Left ventricle myocardium inferior (tissue), 1 donor: ENCODE measurements at regions of chr5 and their contacts with region 1.

Region 1: DNA sequence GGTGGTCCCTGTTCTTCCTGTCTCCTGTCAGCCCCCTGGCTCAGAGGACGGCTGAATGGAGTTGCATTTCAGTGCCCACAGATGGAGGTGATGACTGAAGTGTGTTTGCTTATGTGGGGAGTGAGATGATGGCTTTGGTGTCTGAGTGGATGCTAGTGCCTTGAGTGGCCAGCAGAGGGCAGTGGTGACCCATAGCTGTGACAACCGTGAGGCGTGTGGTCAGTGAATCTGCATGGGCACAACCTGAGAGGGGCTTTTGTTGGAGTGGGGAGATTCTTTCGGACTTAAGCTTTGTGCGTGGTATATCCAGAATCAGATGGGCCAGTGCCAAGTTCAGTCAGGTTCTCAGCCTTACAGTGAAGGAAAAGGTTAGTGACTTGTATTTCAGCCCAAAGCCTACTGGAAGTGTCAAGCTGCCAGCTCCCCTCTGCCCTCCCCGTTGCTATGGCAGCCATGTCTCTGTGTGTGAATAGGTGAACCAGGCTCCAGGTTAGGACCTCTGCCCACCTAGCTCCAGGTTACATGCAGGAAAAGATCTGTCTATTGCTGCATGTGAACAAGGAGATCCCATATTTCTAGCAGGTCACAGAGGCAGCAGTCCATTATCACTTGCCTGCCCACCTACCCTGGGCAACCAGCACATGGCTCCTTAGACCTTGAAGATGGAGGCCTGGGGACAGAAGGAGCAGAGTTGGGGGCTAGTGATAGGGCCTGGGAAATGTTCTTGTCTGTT is 14.7 kb upstream of the CXXC5 start:
- DNase-seq: no peak
- H3K4me3 ChIP-seq: no peak overlapping the region
- H3K27ac ChIP-seq: no peak overlapping the region
- H3K4me1 ChIP-seq: peaks cover 38% of the 10 kb centered on the region
- H3K27me3 ChIP-seq: no peaks in the 10 kb centered on the region
- CTCF ChIP-seq: peak; percentile 99

Region 2: DNA sequence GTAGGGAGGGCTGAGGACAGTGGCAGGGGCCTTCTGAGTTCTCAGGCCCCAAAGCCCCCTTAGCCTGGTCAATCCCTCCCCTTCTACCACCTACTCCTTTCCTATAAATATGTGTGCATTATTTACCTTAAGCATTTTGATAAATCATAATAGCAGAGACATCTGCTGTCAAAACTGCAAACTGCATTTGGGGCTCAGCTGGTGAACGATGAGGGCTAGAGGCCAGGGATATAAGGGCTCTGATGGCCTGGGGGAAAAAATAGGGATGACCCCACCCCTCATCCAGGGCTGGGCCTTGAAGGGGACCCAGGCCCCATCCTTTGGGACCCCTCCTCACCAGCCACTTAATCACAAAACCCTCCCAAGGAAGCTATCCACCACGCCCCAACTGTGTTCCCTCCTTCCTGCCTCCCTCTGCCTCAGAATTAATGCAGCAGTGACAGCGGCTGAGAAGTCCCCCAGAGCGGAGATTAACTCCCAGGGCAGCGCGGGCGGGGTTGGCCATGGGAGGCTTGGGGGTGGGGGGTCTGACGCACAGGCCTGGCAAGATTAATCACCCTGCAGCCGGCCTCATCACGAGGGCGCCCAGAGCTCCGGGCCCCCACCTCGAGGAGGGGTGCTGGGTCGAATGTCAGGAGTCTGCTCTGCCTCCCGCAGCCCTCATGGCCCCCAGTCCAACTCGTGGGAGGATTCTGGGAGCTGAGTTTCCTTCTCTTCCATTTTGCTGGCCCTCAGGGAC is 56.8 kb after region 1 on chr5:
- intact Hi-C with region 1: loop called (anchors 5 kb)
- DNase-seq: no peak
- H3K4me3 ChIP-seq: no peak overlapping the region
- H3K27ac ChIP-seq: peak overlapping the region; percentile 85
- H3K4me1 ChIP-seq: peaks cover 72% of the 10 kb centered on the region
- H3K27me3 ChIP-seq: no peaks in the 10 kb centered on the region
- CTCF ChIP-seq: peak; percentile 72

Region 3: DNA sequence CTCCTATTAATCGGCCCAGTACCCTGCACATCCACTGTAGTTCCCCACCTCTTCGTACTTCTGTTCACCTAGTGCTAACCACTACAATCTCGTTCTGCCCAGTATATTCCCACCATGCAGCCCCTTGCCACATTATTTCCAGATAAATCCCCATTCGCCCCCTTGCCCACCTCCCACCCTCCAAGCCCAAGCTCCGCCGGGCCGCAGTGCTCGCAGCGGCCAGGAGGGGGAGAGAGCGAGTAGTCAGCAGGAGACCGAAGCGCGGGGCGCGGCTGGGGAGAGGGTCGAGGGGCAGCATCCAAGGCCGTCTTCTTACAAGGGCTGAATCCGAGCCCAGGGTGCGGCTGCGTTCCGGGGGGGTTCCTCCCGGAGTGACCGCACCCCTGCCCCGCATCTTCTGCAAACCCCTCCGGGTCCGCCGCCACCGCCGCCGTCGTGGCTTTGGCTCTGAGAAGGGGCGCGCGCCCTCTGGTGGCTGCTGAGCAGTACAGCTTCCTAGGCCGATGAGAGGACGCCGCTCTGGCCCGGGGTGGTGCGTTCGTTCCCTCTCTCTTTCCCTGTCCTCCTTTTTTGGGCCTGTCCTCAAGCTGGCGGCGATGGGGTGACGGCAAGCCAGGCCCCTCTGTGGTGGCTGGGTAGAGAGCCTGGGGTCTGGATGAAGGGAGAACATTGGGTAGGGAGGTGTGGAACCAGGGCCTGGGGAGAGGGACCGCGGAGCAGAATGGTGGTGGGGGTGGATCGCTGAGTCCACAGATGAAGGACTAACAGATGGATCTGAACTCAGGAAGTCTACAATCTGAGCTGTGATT is 132.2 kb after region 1 on chr5:
- intact Hi-C with region 1: loop called (anchors 5 kb)
- DNase-seq: peak; percentile 79
- H3K4me3 ChIP-seq: peak overlapping the region; percentile 74
- H3K27ac ChIP-seq: peak overlapping the region; percentile 59
- H3K4me1 ChIP-seq: peaks cover 36% of the 10 kb centered on the region
- H3K27me3 ChIP-seq: peaks cover 33% of the 10 kb centered on the region
- CTCF ChIP-seq: peak; percentile 97